Mucosa of descending colon (tissue), 3 donors: ENCODE measurements at regions of chr6 and their contacts with region 1.

Region 1: DNA sequence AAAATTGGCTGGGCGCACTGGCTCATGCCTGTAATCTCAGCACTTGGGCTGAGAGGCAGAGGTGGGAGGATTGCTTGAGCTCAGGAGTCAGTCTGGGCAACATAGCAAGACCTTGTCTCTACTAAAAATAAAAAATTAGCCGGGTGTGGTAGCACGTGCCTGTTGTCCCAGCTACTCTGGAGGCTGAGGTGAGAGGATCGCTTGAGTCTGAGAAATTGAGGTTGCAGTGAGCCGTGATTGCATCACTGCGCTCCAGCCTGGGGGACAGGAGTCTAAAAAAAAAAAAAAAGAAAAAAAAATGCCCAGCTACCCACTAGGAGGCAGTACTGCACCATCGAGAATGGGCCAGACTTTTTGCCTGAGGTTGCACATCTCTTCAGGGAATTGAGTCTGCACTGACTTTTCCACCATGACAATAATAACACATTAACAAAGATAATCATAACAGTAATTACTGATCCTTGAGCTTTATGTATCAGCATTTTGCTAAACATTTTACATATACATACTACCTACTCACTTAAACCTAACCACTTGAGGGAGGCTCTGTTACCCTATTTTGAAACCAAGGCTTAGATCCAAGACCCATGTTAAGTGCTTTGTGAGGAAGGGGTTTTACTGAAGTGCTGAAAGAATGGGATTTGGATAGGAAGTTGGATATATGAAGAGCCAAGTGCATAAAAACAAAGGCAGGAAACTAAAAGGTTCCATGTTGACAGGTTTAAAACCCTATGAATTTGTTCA is 21.0 kb downstream of the SRSF3 start:
- DNase-seq: peak in 2 of 3 donors; percentile 26 to 43
- ATAC-seq: peak; percentile 63
- H3K4me3 ChIP-seq: no peak overlapping the region
- H3K4me1 ChIP-seq: peaks cover 15% of the 10 kb centered on the region
- CTCF ChIP-seq: peak; percentile 25

Region 2: DNA sequence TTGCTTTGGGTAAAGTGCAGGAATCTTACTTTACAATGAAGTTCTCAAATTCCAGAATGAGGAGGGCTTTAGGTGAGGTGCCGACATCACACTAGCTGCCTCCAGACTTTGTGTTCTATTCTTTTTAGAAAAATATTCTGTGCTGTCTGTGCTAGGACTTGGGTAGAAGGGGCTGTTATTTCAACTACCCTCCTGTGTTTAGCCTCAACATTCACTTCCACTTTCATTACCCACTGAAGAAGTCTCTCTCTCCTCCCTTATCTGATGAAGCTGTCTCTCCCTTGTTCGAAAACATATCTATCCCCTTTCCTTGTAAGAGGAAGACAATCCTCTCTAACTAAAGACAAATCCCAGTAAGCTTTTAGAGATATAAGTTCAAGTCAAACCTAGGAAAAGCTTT is 443.6 kb before region 1 on chr6:
- intact Hi-C with region 1: no loop called
- DNase-seq: no peak
- ATAC-seq: no peak
- H3K4me3 ChIP-seq: no peak overlapping the region
- H3K4me1 ChIP-seq: no peaks in the 10 kb centered on the region
- CTCF ChIP-seq: no peak

Region 3: GRCh38 chr6:36759148-36759759 is 144.1 kb after region 1 on chr6:
- intact Hi-C with region 1: loop called (anchors 5 to 10 kb)
- DNase-seq: peak; percentile 89 to 93 (median 89)
- ATAC-seq: peak; percentile 87
- H3K4me3 ChIP-seq: no peak overlapping the region
- H3K4me1 ChIP-seq: peaks cover 28% of the 10 kb centered on the region
- CTCF ChIP-seq: peak; percentile 96

Region 4: GRCh38 chr6:36851149-36851614 is 236.0 kb after region 1 on chr6:
- intact Hi-C with region 1: loop called in 1 of 2 experiments (anchors 10 kb)
- DNase-seq: peak in 1 of 3 donors; percentile 60
- ATAC-seq: peak; percentile 49
- H3K4me3 ChIP-seq: no peak overlapping the region
- H3K4me1 ChIP-seq: peaks cover 5% of the 10 kb centered on the region
- CTCF ChIP-seq: peak; percentile 43